Naive thymus-derived CD4-positive, alpha-beta T cell (primary cell): ENCODE measurements at regions of chr7 and their contacts with region 1.

Region 1: DNA sequence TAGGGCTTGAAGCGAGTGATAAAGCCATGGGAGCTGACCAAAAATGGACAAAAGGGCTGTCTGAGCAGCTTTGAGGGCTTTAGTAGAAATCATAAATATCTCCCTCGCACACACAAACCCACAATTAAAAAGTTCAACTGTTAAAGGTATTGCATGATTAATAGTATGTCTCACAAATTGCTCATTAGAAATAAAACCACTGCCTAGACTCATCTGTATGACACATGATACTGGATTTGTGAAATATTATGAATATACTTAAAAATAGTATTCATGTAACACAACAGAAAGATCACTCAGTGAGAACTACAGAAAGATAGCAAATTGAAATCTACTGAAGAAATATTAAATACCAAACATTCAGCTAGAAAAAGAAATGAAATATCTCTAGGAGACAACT is 11.9 kb upstream of the PTPN12 start:
- DNase-seq: no peak
- ATAC-seq: no peak
- H3K4me3 ChIP-seq: no peak overlapping the region
- H3K4me3 Mint-ChIP-seq: no peak overlapping the region
- H3K27ac ChIP-seq: no peak overlapping the region
- H3K27ac Mint-ChIP-seq: no peak overlapping the region
- H3K4me1 ChIP-seq: no peaks in the 10 kb centered on the region
- H3K4me1 Mint-ChIP-seq: peaks cover 0 to 8% (median 0%) of the 10 kb centered on the region in 7 donors
- H3K27me3 ChIP-seq: peaks cover 0 to 6% of the 10 kb centered on the region in 2 donors
- H3K27me3 Mint-ChIP-seq: peaks cover 0 to 23% (median 0%) of the 10 kb centered on the region in 5 donors

Region 2: GRCh38 chr7:77550586-77550985 is 25.4 kb after region 1 on chr7:
- CTCF ChIA-PET with region 1: no interaction called
- POLR2A ChIA-PET with region 1: no interaction called
- intact Hi-C with region 1: loop called in 1 of 2 experiments (anchors 1 kb)
- DNase-seq: no peak
- ATAC-seq: no peak
- H3K4me3 ChIP-seq: no peak overlapping the region
- H3K4me3 Mint-ChIP-seq: no peak overlapping the region
- H3K27ac ChIP-seq: no peak overlapping the region
- H3K27ac Mint-ChIP-seq: no peak overlapping the region
- H3K4me1 ChIP-seq: no peaks in the 10 kb centered on the region
- H3K4me1 Mint-ChIP-seq: peaks cover 10 to 50% (median 23%) of the 10 kb centered on the region in 7 donors
- H3K27me3 ChIP-seq: no peaks in the 10 kb centered on the region
- H3K27me3 Mint-ChIP-seq: no peaks in the 10 kb centered on the region

Region 3: DNA sequence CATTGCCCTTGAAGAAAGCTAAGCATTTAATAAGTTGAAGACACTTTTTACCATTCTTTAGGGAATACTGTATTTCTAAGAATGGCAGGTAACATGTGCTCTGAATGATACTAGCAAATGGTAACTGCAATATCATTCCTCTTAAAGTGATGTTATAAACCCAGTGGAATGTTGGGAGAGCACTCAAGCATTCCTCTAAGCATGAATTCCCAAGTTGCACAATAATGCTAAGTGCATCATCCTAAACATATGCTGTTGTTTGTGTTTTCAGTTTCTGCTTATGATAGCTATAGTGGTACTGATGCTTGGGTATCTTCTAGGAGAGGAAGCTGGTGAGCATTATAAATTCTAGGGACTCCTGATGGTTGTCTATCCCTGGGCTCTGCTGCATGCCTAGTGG is 947.3 kb after region 1 on chr7:
- CTCF ChIA-PET with region 1: no interaction called
- POLR2A ChIA-PET with region 1: no interaction called
- intact Hi-C with region 1: no loop called
- DNase-seq: no peak
- ATAC-seq: no peak
- H3K4me3 ChIP-seq: no peak overlapping the region
- H3K4me3 Mint-ChIP-seq: no peak overlapping the region
- H3K27ac ChIP-seq: no peak overlapping the region
- H3K27ac Mint-ChIP-seq: no peak overlapping the region
- H3K4me1 ChIP-seq: no peaks in the 10 kb centered on the region
- H3K4me1 Mint-ChIP-seq: no peaks in the 10 kb centered on the region
- H3K27me3 ChIP-seq: no peaks in the 10 kb centered on the region
- H3K27me3 Mint-ChIP-seq: peaks cover 0 to 5% (median 0%) of the 10 kb centered on the region in 5 donors